Calu3 (cell line): ENCODE measurements at regions of chr12 and their contacts with region 1.

Region 1: GRCh38 chr12:121005346-121005815 is 10.9 kb downstream of the C12orf43 start:
- DNase-seq: peak; percentile 75
- H3K4me3 Mint-ChIP-seq: no peak overlapping the region
- H3K27ac Mint-ChIP-seq: peak overlapping the region; percentile 1
- H3K4me1 Mint-ChIP-seq: peaks cover 31% of the 10 kb centered on the region
- H3K27me3 Mint-ChIP-seq: no peaks in the 10 kb centered on the region
- CTCF ChIP-seq: peak; percentile 75

Region 2: DNA sequence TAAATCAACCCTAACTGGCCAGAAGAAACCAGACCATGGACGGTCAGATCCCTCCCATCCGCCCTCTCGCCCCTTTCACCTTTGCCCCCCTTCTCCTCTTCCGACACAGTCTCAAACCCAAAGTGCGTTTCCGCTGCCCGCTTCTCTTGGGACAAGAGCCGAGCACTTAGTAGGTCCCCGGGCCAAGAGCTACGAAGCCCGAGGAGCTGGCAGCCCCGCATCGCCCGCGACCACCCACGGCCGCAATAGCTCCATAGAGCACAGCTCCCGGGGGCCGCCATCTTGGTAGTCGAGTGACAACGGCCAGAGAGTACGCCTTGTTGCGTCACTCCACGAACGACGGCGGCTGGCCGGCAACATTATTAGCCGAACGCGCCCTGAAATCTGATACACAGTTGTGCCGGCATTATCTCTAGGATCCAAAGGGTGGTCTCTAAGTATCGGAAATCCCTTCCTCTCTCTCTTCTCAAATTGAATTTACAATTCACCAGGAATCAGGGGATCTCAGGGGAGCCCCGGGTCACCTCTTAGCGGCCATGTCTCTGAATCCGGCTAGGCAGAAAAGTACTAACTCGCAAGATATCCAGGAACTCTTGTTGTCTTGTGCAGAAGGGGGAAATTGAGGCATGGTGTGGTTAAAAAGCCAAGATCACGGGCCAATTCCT is 476.4 kb before region 1 on chr12 and contains the start of gene COQ5:
- CTCF ChIA-PET with region 1: no interaction called
- intact Hi-C with region 1: no loop called
- DNase-seq: peak; percentile 90
- H3K4me3 Mint-ChIP-seq: peak within 1 kb of the TSS; percentile 87
- H3K27ac Mint-ChIP-seq: peak within 1 kb of the TSS; percentile 94
- H3K4me1 Mint-ChIP-seq: peaks cover 10% of the 10 kb centered on the region
- H3K27me3 Mint-ChIP-seq: no peaks in the 10 kb centered on the region
- CTCF ChIP-seq: no peak
- total RNA-seq, gene COQ5: 33.8 and 36.8 TPM in 2 replicates

Region 3: GRCh38 chr12:120649442-120650232 is 355.7 kb before region 1 on chr12:
- CTCF ChIA-PET with region 1: interaction called, 4 read pairs
- intact Hi-C with region 1: loop called (anchors 2 kb)
- DNase-seq: no peak
- H3K4me3 Mint-ChIP-seq: no peak overlapping the region
- H3K27ac Mint-ChIP-seq: no peak overlapping the region
- H3K4me1 Mint-ChIP-seq: peaks cover 17% of the 10 kb centered on the region
- H3K27me3 Mint-ChIP-seq: peaks cover 99% of the 10 kb centered on the region
- CTCF ChIP-seq: peak; percentile 52

Region 4: GRCh38 chr12:120944645-120945231 is 60.6 kb before region 1 on chr12:
- CTCF ChIA-PET with region 1: interaction called, 14 read pairs
- intact Hi-C with region 1: loop called (anchors 1 kb)
- DNase-seq: peak; percentile 87
- H3K4me3 Mint-ChIP-seq: no peak overlapping the region
- H3K27ac Mint-ChIP-seq: peak overlapping the region; percentile 73
- H3K4me1 Mint-ChIP-seq: peaks cover 8% of the 10 kb centered on the region
- H3K27me3 Mint-ChIP-seq: peaks cover 10% of the 10 kb centered on the region
- CTCF ChIP-seq: peak; percentile 79

Region 5: DNA sequence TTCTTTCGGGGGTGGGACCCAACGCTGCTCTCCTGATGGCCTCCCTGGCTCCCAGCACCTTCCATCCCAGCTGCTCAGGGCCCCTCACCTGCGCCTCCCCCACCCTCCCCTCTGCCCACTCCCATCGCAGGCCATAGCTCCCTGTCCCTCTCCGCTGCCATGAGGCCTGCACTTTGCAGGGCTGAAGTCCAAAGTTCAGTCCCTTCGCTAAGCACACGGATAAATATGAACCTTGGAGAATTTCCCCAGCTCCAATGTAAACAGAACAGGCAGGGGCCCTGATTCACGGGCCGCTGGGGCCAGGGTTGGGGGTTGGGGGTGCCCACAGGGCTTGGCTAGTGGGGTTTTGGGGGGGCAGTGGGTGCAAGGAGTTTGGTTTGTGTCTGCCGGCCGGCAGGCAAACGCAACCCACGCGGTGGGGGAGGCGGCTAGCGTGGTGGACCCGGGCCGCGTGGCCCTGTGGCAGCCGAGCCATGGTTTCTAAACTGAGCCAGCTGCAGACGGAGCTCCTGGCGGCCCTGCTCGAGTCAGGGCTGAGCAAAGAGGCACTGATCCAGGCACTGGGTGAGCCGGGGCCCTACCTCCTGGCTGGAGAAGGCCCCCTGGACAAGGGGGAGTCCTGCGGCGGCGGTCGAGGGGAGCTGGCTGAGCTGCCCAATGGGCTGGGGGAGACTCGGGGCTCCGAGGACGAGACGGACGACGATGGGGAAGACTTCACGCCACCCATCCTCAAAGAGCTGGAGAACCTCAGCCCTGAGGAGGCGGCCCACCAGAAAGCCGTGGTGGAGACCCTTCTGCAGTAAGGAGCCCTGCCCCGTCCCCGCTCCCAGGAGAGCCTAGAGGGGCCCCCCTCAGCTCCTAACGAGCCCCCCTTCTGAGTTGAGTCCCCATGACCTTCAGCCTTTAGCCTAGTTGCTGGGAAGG is 26.8 kb before region 1 on chr12 and contains the start of gene HNF1A:
- CTCF ChIA-PET with region 1: interaction called, 24 read pairs
- intact Hi-C with region 1: loop called (anchors 5 kb)
- DNase-seq: peak; percentile 50
- H3K4me3 Mint-ChIP-seq: peak within 1 kb of the TSS; percentile 93
- H3K27ac Mint-ChIP-seq: peak within 1 kb of the TSS; percentile 87
- H3K4me1 Mint-ChIP-seq: peaks cover 43% of the 10 kb centered on the region
- H3K27me3 Mint-ChIP-seq: no peaks in the 10 kb centered on the region
- CTCF ChIP-seq: no peak
- total RNA-seq, gene HNF1A: 8.4 and 10.0 TPM in 2 replicates

Region 6: DNA sequence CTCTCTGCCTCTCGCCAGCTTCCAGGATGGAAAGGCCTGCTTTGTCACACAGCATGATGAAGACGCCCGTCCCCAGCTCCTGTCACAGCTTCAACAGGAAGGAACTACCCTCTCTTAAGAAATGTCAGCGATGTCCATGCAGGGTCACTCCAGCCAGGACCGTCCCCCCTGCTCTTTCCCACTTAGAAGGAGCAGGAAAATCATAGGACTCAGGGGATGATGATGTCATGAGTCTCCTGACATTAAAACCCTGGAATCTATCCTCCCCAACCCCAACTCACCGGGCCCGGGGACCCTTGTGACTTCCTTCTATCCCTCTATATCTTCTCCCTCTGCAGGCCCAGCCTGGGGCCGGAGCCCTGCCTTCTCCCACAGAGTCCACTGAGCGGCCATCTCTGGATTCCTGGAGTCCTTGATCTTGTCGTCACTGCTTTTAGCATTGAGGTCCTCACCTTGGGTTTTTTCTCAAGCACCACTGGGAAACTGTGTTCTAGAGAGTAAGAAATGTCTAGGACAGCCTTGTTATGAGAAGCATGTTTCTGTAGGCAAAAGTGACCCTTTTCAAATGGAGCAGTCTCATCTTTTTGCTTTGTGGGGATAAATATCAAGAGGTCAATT is 84.5 kb after region 1 on chr12:
- CTCF ChIA-PET with region 1: no interaction called
- intact Hi-C with region 1: no loop called
- DNase-seq: no peak
- H3K4me3 Mint-ChIP-seq: no peak overlapping the region
- H3K27ac Mint-ChIP-seq: no peak overlapping the region
- H3K4me1 Mint-ChIP-seq: no peaks in the 10 kb centered on the region
- H3K27me3 Mint-ChIP-seq: peaks cover 62% of the 10 kb centered on the region
- CTCF ChIP-seq: no peak